Naive thymus-derived CD8-positive, alpha-beta T cell (primary cell): ENCODE measurements at regions of chr10 and their contacts with region 1.

Region 1: GRCh38 chr10:99732033-99732912 is at the starts of genes COX15 and CUTC:
- DNase-seq: peak; percentile 92 to 96 (median 93)
- ATAC-seq: peak; percentile 88
- H3K4me3 Mint-ChIP-seq: peak within 1 kb of the TSS; percentile 99 to 100 (median 100)
- H3K27ac Mint-ChIP-seq: peak within 1 kb of the TSS; percentile 97 to 100 (median 99)
- H3K4me1 Mint-ChIP-seq: peaks cover 23 to 59% (median 53%) of the 10 kb centered on the region in 4 donors
- H3K27me3 Mint-ChIP-seq: peaks cover 0 to 1% (median 0%) of the 10 kb centered on the region in 5 donors
- polyA plus RNA-seq, gene COX15: 33.3 to 34.7 (median 33.8) TPM
- polyA plus RNA-seq, gene CUTC: 61.2 to 69.1 (median 64.6) TPM

Region 2: DNA sequence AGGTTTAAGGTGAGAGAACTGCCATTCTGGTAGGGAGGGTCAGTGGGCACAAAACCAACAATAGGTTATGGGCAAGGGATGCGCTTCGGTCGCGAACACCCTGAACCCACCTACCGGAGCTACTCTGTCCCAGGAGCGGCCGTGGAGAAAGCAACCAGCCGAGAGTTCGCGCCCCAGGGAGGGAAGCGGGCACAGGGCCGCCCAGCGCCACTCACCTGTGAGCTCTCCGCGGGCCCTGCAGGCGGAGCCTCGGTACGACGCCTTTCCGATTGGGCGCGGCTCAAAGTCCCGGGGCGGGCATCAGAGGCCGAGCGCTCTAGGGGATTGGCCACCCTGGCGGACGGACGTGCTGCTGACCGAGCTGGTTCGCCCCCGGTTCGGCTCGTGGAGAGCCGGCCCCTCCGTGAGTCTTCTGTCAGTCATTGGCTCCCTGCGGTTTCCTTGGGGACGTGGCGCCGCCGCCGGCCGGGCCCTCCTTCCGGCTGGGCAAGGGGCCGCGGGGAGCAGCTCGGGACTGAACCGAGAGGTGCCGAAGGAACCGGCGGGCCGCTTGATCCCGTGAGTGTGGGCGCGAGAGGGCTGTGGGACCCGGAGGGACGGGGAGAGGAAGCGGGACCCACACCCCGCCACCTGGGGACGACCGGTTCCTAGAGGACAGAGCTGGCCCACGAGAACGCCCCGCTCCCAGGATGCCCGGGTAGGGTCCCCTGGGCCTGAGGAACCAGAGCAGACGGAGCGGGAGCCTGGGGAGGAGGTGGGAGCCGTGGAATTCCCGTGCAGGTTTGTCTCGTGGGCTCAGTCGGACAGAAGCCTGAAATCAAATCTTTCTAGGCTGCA is 73.0 kb before region 1 on chr10 and contains the start of gene ENTPD7:
- POLR2A ChIA-PET with region 1: interaction called, 14 read pairs
- DNase-seq: peak; percentile 70 to 91 (median 82)
- ATAC-seq: peak; percentile 97 to 99
- H3K4me3 Mint-ChIP-seq: peak within 1 kb of the TSS; percentile 85 to 97 (median 90)
- H3K27ac Mint-ChIP-seq: peak within 1 kb of the TSS; percentile 32 to 93 (median 75)
- H3K4me1 Mint-ChIP-seq: peaks cover 9 to 29% (median 23%) of the 10 kb centered on the region in 4 donors
- H3K27me3 Mint-ChIP-seq: peaks cover 3 to 9% (median 8%) of the 10 kb centered on the region in 5 donors
- polyA plus RNA-seq, gene ENTPD7: 0.33 to 0.83 (median 0.82) TPM